PC-3 (cell line): ENCODE measurements at regions of chrX and their contacts with region 1.

Region 1: GRCh38 chrX:133676344-133677122 is 261.2 kb upstream of the GPC4 start:
- DNase-seq: peak; percentile 75
- ATAC-seq: peak; percentile 89
- H3K4me3 ChIP-seq: no peak overlapping the region
- H3K27ac ChIP-seq: peak overlapping the region; percentile 74
- H3K4me1 ChIP-seq: peaks cover 38% of the 10 kb centered on the region
- H3K27me3 ChIP-seq: no peaks in the 10 kb centered on the region
- CTCF ChIP-seq: no peak

Region 2: GRCh38 chrX:133726211-133726641 is 49.7 kb after region 1 on chrX:
- CTCF ChIA-PET with region 1: no interaction called
- POLR2A ChIA-PET with region 1: interaction called, 5 read pairs
- intact Hi-C with region 1: loop called (anchors 1 kb)
- DNase-seq: peak; percentile 93
- ATAC-seq: peak; percentile 95
- H3K4me3 ChIP-seq: peak overlapping the region; percentile 25; the same call in 1 of the 2 replicates
- H3K27ac ChIP-seq: peak overlapping the region; percentile 97
- H3K4me1 ChIP-seq: peaks cover 20% of the 10 kb centered on the region
- H3K27me3 ChIP-seq: no peaks in the 10 kb centered on the region
- CTCF ChIP-seq: no peak

Region 3: DNA sequence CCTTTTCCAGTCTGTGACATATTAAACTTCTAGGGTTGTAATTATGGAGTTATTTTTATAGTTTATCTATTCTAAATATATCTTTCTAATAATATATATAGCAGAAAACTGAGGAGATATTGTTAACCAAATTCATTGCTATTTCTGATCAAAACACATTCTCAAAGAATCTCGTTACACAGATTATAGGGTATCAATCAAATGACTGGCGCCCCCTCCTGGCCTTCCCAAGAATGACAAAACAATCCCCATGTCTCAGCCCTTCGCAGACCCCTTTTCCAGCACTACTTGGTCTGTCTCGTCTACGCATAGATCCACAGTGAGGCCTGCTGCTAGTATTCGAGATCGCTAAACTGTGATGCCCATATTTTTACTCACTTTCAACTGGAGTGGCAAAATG is 99.5 kb after region 1 on chrX:
- CTCF ChIA-PET with region 1: no interaction called
- POLR2A ChIA-PET with region 1: no interaction called
- intact Hi-C with region 1: loop called (anchors 2 kb)
- DNase-seq: peak; percentile 49
- ATAC-seq: 0 out of 2 replicates have a peak, but pooled peaks have one; percentile 24
- H3K4me3 ChIP-seq: no peak overlapping the region
- H3K27ac ChIP-seq: no peak overlapping the region
- H3K4me1 ChIP-seq: no peaks in the 10 kb centered on the region
- H3K27me3 ChIP-seq: no peaks in the 10 kb centered on the region
- CTCF ChIP-seq: peak; percentile 71